ENCODE measurements at regions of chr2 and their contacts with region 1.

Region 1: GRCh38 chr2:64698668-64699444 is 45.1 kb upstream of the SERTAD2 start:
- DNase-seq: no peak
- H3K4me3 ChIP-seq: no peak overlapping the region
- H3K4me3 Mint-ChIP-seq: peak overlapping the region in 5 of 8 donors; percentile 9 to 53 (median 22)
- H3K27ac ChIP-seq: no peak overlapping the region
- H3K27ac Mint-ChIP-seq: peak overlapping the region in 3 of 7 donors; percentile 2 to 34 (median 22)
- H3K4me1 ChIP-seq: peaks cover 36% of the 10 kb centered on the region
- H3K4me1 Mint-ChIP-seq: peaks cover 21 to 41% (median 30%) of the 10 kb centered on the region in 4 donors
- H3K27me3 ChIP-seq: no peaks in the 10 kb centered on the region
- H3K27me3 Mint-ChIP-seq: no peaks in the 10 kb centered on the region

Region 2: DNA sequence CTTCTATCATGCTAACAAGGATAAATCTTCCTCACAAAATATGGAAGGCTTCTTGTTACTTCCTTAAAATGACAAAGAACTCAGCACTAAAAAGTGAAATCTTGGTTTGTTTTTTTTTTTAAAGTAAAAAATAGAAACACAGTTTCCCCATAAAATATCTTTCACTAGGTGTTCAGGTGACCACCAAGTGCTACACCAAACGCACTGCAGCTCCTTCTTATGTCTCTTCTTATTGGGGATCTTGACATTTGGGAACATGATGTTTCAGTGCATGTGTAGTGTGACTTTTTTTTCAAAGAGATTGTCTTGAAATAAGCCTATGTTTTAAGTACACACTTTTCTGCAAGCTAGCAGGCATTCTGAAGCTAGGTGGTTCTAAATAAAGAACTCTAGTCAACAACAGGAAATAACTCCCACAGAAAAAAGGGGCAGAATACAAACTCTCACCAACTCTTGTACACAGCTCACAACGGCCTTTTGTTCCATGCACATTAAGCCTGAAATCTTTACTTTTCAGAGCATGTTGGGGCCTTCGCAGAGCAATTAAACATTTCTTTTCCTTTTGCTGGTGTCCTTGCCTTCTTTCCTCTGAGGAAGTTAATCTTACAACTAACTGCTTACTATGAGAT is 31.9 kb before region 1 on chr2:
- CTCF ChIA-PET with region 1: no interaction called
- POLR2A ChIA-PET with region 1: no interaction called
- intact Hi-C with region 1: loop called (anchors 5 kb)
- DNase-seq: peak in 3 of 5 donors; percentile 12 to 25 (median 18)
- H3K4me3 ChIP-seq: no peak overlapping the region
- H3K4me3 Mint-ChIP-seq: peak overlapping the region; percentile 1 to 68 (median 35)
- H3K27ac ChIP-seq: no peak overlapping the region
- H3K27ac Mint-ChIP-seq: peak overlapping the region; percentile 61 to 94 (median 67)
- H3K4me1 ChIP-seq: peaks cover 34% of the 10 kb centered on the region
- H3K4me1 Mint-ChIP-seq: peaks cover 15 to 34% (median 25%) of the 10 kb centered on the region in 4 donors
- H3K27me3 ChIP-seq: no peaks in the 10 kb centered on the region
- H3K27me3 Mint-ChIP-seq: no peaks in the 10 kb centered on the region

Region 3: GRCh38 chr2:64767670-64768468 is 69.0 kb after region 1 on chr2:
- CTCF ChIA-PET with region 1: interaction called, 3 read pairs
- POLR2A ChIA-PET with region 1: no interaction called
- intact Hi-C with region 1: loop called (anchors 5 kb)
- DNase-seq: peak; percentile 66 to 86 (median 69)
- H3K4me3 ChIP-seq: peak overlapping the region; percentile 47 to 72
- H3K4me3 Mint-ChIP-seq: peak overlapping the region; percentile 86 to 99 (median 94)
- H3K27ac ChIP-seq: peak overlapping the region; percentile 90
- H3K27ac Mint-ChIP-seq: peak overlapping the region; percentile 81 to 97 (median 96)
- H3K4me1 ChIP-seq: peaks cover 14% of the 10 kb centered on the region
- H3K4me1 Mint-ChIP-seq: peaks cover 12 to 23% (median 13%) of the 10 kb centered on the region in 4 donors
- H3K27me3 ChIP-seq: no peaks in the 10 kb centered on the region
- H3K27me3 Mint-ChIP-seq: no peaks in the 10 kb centered on the region